Endothelial cell of umbilical vein (primary cell): ENCODE measurements at regions of chr11 and their contacts with region 1.

Region 1: GRCh38 chr11:71928737-71929452 is at the start of gene RNF121:
- DNase-seq: peak; percentile 97
- H3K4me3 ChIP-seq: peak within 1 kb of the TSS; percentile 63 to 95 (median 78)
- H3K27ac ChIP-seq: peak within 1 kb of the TSS; percentile 97
- H3K4me1 ChIP-seq: peaks cover 52% of the 10 kb centered on the region
- H3K27me3 ChIP-seq: no peaks in the 10 kb centered on the region
- CTCF ChIP-seq: no peak
- POLR2A ChIP-seq: no peak
- total RNA-seq, gene RNF121: 61.4 and 61.7 TPM in 2 replicates

Region 2: GRCh38 chr11:72015511-72016171 is 86.7 kb after region 1 on chr11:
- CTCF ChIA-PET with region 1: interaction called, 10 read pairs
- POLR2A ChIA-PET with region 1: no interaction called
- dilution Hi-C with region 1: no loop called
- intact Hi-C with region 1: no loop called
- DNase-seq: no peak
- H3K4me3 ChIP-seq: no peak overlapping the region
- H3K27ac ChIP-seq: no peak overlapping the region
- H3K4me1 ChIP-seq: no peaks in the 10 kb centered on the region
- H3K27me3 ChIP-seq: no peaks in the 10 kb centered on the region
- CTCF ChIP-seq: peak; percentile 24 to 57
- POLR2A ChIP-seq: no peak

Region 3: DNA sequence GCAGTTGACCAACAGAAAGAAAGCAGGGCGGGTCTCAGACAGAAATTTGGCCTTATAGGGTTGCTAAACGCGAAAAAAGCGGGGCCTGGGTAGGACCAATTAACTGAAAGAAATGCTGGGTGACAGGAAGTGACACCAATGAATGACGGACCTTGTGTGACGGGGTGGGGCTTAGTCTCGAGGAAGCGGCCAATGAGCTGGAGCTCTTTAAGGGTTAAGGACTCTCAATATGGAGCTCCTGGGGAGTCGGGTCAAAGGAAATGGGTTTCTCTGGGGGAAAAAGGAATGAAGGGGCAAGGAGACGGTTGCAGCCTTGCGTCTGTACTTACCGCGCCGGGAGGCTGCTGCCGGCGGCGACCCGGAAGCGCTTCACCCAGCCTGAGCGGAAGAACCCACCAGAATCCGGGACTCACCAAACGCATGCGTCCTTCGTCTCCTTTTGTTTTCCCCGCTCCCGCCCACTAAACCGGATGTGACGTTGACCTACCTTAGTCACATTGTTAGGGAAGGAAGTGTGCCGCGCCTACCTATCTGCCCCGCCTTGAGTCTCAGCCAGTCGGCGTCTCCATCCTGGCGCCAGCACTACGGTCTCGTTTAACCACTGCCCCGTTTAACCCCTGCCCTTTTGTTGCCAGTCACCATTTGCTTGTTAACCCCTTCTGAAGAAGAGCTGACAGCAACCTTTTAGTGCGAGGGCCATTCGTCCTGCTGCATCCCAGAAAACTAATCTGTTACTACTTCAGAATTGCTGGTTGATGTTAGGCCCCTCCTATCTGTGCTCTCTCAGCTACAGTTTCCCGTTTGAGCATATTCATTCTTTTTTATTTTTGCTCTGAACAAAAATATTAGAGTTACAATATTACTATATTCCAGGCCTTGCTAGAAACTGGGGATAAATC is 183.7 kb after region 1 on chr11 and contains the start of gene ANAPC15:
- CTCF ChIA-PET with region 1: no interaction called
- POLR2A ChIA-PET with region 1: interaction called, 3 read pairs
- dilution Hi-C with region 1: no loop called
- intact Hi-C with region 1: loop called (anchors 2 kb)
- DNase-seq: peak; percentile 100
- H3K4me3 ChIP-seq: peak within 1 kb of the TSS; percentile 14 to 69 (median 53)
- H3K27ac ChIP-seq: peak within 1 kb of the TSS; percentile 90
- H3K4me1 ChIP-seq: peaks cover 14% of the 10 kb centered on the region
- H3K27me3 ChIP-seq: peaks cover 0 to 3% of the 10 kb centered on the region in 2 experiments
- CTCF ChIP-seq: no peak
- POLR2A ChIP-seq: peak; percentile 99
- total RNA-seq, gene ANAPC15: 67.0 and 72.4 TPM in 2 replicates

Region 4: GRCh38 chr11:72471005-72471898 is 542.4 kb after region 1 on chr11:
- CTCF ChIA-PET with region 1: no interaction called
- POLR2A ChIA-PET with region 1: no interaction called
- dilution Hi-C with region 1: no loop called
- intact Hi-C with region 1: no loop called
- DNase-seq: peak; percentile 72
- H3K4me3 ChIP-seq: no peak overlapping the region
- H3K27ac ChIP-seq: no peak overlapping the region
- H3K4me1 ChIP-seq: no peaks in the 10 kb centered on the region
- H3K27me3 ChIP-seq: peaks cover 18 to 31% of the 10 kb centered on the region in 2 experiments
- CTCF ChIP-seq: peak; percentile 84 to 85
- POLR2A ChIP-seq: no peak